Endothelial cell of umbilical vein (primary cell): ENCODE measurements at regions of chr17 and their contacts with region 1.

Region 1: GRCh38 chr17:58112970-58113631 is 29.9 kb downstream of the DYNLL2 start:
- DNase-seq: peak; percentile 69
- H3K4me3 ChIP-seq: no peak overlapping the region
- H3K27ac ChIP-seq: no peak overlapping the region
- H3K4me1 ChIP-seq: no peaks in the 10 kb centered on the region
- H3K27me3 ChIP-seq: peaks cover 4 to 5% of the 10 kb centered on the region in 2 experiments
- CTCF ChIP-seq: peak; percentile 84 to 89
- POLR2A ChIP-seq: no peak

Region 2: DNA sequence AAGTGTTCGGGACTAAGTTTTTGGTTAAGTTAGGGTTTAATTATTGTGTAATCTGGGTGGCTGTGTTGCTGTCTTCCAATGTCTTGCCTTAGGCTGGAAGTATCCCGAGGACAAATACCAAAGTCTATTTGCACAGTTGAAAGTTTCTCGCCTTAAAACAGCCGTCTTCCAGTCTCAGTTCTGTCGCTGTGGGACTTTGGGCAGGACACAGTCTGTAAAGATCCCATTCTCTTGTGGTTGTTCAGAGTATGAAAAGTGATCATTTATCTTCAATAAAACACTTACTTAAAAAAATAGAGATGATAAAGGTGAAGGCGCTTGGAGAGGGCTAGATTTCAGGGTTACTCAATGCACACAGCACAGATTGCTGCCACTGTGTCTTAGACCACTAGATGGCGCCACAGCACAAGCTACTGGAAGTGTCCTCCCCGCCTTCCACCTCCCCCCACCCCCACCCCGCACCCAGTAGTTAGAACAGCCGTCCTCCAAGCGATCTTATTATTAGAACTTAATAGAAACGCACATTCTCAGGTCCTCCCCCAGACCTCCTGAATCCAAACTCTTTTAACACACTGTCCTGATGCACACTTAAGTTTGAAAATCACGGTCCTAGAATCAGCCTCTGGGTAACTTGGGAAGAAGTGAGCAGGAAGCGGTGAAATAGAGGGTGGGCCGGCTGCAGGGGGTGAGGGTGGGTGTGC is 982.2 kb before region 1 on chr17:
- CTCF ChIA-PET with region 1: interaction called, 3 read pairs
- POLR2A ChIA-PET with region 1: no interaction called
- dilution Hi-C with region 1: no loop called
- intact Hi-C with region 1: loop called (anchors 1 kb)
- DNase-seq: peak; percentile 57
- H3K4me3 ChIP-seq: no peak overlapping the region
- H3K27ac ChIP-seq: no peak overlapping the region
- H3K4me1 ChIP-seq: no peaks in the 10 kb centered on the region
- H3K27me3 ChIP-seq: no peaks in the 10 kb centered on the region
- CTCF ChIP-seq: peak; percentile 46 to 85
- POLR2A ChIP-seq: no peak

Region 3: DNA sequence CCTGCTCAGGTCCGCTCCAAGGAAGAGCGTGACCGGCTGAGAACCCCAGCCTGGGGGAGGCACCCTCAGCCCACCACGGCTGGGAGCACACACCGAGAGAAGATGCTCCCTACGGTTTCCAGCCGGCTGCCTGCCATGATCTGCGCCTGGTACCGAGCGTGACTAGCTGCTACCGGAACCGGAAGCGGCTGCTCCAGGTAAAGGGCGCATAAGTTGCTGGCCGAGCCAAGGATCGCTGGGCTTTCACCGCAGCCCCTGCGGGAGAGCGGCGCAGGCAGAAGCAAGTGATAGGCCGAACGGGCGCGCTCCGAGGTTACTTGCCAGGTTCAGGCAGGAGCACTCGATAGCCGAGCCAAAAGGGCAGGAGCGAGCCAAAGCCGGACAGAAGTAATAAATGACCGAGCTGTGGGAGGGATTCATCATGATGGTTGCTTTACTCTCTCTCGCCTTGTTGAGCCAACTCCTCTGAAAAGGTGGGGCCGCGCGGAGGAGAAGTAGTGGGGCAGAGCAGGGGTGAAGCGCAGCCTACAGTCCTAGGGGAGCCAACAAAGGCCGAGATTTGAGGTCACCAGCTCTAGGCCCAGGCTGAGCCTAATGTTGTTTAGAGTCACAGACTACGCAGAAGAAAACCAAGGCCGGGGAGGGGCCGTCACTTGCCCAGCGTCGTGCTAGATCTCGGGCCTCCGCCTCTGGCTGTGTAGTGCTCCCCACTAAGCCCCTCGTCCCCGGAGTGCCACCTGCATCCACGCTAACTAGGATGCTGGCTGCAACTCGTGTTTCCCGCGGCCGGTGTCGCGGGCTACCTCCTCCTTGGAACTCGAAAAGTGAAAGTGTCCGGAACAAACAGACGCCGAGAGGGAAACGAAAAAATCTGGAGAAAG is 263.0 kb before region 1 on chr17 and contains the start of gene MRPS23:
- CTCF ChIA-PET with region 1: interaction called, 3 read pairs
- POLR2A ChIA-PET with region 1: no interaction called
- dilution Hi-C with region 1: no loop called
- intact Hi-C with region 1: loop called (anchors 2 kb)
- DNase-seq: peak; percentile 99
- H3K4me3 ChIP-seq: peak within 1 kb of the TSS; percentile 50 to 81 (median 52)
- H3K27ac ChIP-seq: peak within 1 kb of the TSS; percentile 66
- H3K4me1 ChIP-seq: peaks cover 14% of the 10 kb centered on the region
- H3K27me3 ChIP-seq: no peaks in the 10 kb centered on the region
- CTCF ChIP-seq: no peak
- POLR2A ChIP-seq: peak; percentile 80
- total RNA-seq, gene MRPS23: 40.7 and 46.2 TPM in 2 replicates

Region 4: DNA sequence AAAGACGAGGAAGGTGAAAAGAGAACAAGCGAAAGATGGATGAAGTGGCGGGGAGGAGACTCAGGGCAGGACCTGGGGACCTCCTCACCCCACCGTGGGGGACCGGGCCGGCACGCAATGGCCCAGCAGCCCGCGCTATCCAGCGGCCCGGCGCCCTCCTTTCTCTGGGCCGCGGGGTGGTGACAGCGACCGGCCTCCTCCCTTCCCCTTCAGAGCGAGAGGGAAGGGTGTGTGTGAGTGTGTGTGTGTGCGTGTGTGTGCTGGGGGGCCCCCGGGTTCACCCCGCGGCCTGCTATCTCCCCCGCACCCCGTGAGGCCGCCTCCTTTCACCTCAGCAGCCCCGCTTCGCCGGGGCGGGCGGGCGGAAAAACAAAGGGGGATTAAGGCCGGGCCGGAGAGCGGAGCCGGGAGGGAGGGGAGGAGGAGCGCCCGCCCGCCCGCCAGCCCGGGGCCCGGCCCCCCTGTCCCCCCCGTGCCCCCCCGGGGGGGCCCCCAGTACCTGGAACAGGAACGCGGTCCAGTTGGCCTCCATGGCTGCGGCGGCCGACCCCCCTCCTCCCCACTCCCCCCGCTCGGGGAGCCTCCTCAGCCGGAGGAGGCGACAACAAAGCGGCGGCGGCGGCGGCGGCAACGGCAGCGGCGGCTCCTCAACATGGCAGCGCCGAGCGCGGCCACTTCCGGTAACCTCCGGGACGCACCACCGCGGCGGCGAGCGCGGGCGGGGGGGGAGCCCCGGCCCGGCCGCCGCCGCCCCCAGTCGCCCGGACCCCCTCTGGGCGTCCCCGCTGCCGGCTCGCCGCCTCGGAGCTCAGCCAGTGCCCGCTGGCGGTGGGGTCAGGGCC is 125.3 kb before region 1 on chr17 and contains the start of gene VEZF1:
- CTCF ChIA-PET with region 1: interaction called, 10 read pairs
- POLR2A ChIA-PET with region 1: no interaction called
- dilution Hi-C with region 1: no loop called
- intact Hi-C with region 1: no loop called
- DNase-seq: peak; percentile 49
- H3K4me3 ChIP-seq: peak within 1 kb of the TSS; percentile 81 to 89 (median 86)
- H3K27ac ChIP-seq: peak within 1 kb of the TSS; percentile 92
- H3K4me1 ChIP-seq: peaks cover 47% of the 10 kb centered on the region
- H3K27me3 ChIP-seq: no peaks in the 10 kb centered on the region
- CTCF ChIP-seq: no peak
- POLR2A ChIP-seq: no peak
- total RNA-seq, gene VEZF1: 58.2 and 59.0 TPM in 2 replicates

Region 5: GRCh38 chr17:58082870-58083490 is 30.1 kb before region 1 on chr17 and contains the start of gene DYNLL2:
- CTCF ChIA-PET with region 1: interaction called, 4 read pairs
- POLR2A ChIA-PET with region 1: no interaction called
- dilution Hi-C with region 1: no loop called
- intact Hi-C with region 1: loop called (anchors 2 kb)
- DNase-seq: peak; percentile 78
- H3K4me3 ChIP-seq: peak within 1 kb of the TSS; percentile 53 to 97 (median 61)
- H3K27ac ChIP-seq: peak within 1 kb of the TSS; percentile 37
- H3K4me1 ChIP-seq: peaks cover 12% of the 10 kb centered on the region
- H3K27me3 ChIP-seq: peaks cover 10 to 15% of the 10 kb centered on the region in 2 experiments
- CTCF ChIP-seq: no peak
- POLR2A ChIP-seq: no peak
- total RNA-seq, gene DYNLL2: 17.1 and 19.0 TPM in 2 replicates

Region 6: DNA sequence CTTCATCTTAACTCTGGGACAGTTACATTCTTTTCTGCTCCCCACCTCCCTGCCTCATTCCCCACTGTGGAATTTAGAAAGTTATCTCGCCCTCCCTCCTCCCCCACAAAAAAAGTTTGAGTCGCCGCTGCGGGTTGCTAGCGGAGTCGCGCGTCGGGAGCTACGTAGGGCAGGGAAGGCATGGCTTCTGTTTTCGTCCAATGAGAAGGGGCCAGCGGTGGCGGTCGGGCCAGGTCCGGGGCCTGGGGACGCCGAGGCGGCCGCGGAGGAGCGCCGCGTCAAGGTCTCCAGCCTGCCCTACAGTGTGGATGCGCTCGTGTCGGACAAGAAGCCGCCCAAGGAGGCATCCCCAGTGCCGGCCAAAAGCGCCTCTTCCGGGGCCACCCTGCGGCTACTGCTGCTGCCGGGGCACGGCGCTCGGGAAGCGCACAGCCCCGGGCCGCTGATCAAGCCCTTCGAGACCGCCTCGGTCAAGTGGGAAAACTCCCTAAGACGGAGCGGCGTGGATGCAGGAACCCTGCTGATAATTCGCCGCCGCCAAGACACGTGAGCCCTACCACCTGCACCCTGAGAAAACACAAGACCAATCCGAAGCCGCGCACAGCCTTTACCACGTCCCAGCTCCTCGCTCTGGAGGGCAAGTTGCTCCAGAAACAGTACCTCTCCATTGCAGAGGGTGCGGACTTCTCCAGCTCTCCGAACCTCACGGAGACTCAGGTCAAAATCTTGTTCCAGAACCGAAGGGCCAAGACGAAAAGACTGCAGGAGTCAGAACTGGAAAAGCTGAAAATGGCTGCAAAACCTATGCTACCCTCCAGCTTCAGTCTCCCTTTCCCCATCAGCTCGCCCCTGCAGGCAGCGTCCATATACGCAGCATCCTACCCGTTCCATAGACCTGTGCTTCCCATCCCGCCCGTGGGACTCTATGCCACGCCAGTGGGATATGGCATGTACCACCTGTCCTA is 44.0 kb after region 1 on chr17:
- CTCF ChIA-PET with region 1: no interaction called
- POLR2A ChIA-PET with region 1: no interaction called
- dilution Hi-C with region 1: no loop called
- intact Hi-C with region 1: no loop called
- DNase-seq: no peak
- H3K4me3 ChIP-seq: no peak overlapping the region
- H3K27ac ChIP-seq: no peak overlapping the region
- H3K4me1 ChIP-seq: peaks cover 3% of the 10 kb centered on the region
- H3K27me3 ChIP-seq: peaks cover 32 to 34% of the 10 kb centered on the region in 2 experiments
- CTCF ChIP-seq: no peak
- POLR2A ChIP-seq: no peak